ENCODE measurements at regions of chr22 and their contacts with region 1.

Region 1: DNA sequence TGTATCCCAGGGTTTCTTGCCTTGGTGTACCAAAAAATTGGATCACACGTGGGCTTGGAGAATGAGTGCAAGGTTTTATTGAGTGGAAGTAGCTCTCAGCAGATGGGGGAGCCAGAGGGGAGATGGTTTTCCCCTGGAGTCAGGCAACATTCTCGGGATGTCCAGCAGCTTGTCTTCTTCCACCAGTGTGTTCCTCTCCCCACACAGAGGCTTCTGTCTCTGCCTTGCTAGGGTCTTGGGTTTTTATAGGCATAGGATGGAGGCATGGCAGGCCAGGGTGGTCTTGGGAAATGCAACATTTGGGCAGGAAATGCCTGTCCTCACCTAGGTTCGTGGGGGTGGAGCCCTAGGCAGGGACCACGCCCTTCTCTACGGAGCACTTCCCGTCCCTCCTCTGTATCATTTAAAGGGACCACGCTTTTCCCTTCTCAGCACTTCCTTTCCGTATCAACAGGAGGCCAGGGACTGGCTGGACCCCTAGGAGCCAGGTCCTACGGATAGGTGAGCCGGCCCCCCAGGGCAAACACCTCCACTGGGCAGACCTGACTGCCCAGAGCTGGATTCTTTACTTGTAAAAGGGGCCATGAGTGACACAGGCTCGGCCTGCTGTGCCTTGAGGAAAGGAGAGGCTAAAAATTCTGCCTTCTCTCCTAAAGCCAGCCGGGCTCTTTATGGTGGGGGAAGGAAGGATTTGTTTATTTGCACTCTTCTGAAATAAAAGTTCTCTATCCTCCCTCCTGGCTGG is 55.3 kb upstream of the CCDC188 start:
- DNase-seq: peak; percentile 21 to 85 (median 73)
- ATAC-seq: peak; percentile 97
- H3K4me3 ChIP-seq: peak overlapping the region; percentile 70 to 86
- H3K4me3 Mint-ChIP-seq: peak overlapping the region; percentile 94
- H3K27ac ChIP-seq: peak overlapping the region; percentile 79 to 83
- H3K27ac Mint-ChIP-seq: peak overlapping the region; percentile 94
- H3K4me1 ChIP-seq: peaks cover 30% of the 10 kb centered on the region
- H3K4me1 Mint-ChIP-seq: peaks cover 29% of the 10 kb centered on the region
- H3K27me3 ChIP-seq: no peaks in the 10 kb centered on the region
- H3K27me3 Mint-ChIP-seq: no peaks in the 10 kb centered on the region
- CTCF ChIP-seq: no peak

Region 2: GRCh38 chr22:20137671-20138416 is 68.3 kb before region 1 on chr22:
- CTCF ChIA-PET with region 1: no interaction called
- POLR2A ChIA-PET with region 1: no interaction called
- intact Hi-C with region 1: no loop called
- DNase-seq: no peak
- ATAC-seq: no peak
- H3K4me3 ChIP-seq: no peak overlapping the region
- H3K4me3 Mint-ChIP-seq: no peak overlapping the region
- H3K27ac ChIP-seq: no peak overlapping the region
- H3K27ac Mint-ChIP-seq: no peak overlapping the region
- H3K4me1 ChIP-seq: peaks cover 25% of the 10 kb centered on the region
- H3K4me1 Mint-ChIP-seq: peaks cover 28% of the 10 kb centered on the region
- H3K27me3 ChIP-seq: no peaks in the 10 kb centered on the region
- H3K27me3 Mint-ChIP-seq: no peaks in the 10 kb centered on the region
- CTCF ChIP-seq: no peak

Region 3: GRCh38 chr22:20238536-20238900 is 32.4 kb after region 1 on chr22:
- CTCF ChIA-PET with region 1: interaction called, 4 read pairs
- POLR2A ChIA-PET with region 1: interaction called, 12 read pairs
- intact Hi-C with region 1: loop called in 1 of 2 experiments (anchors 1 kb)
- DNase-seq: peak in 8 of 9 experiments; percentile 31 to 80 (median 58)
- ATAC-seq: peak; percentile 41
- H3K4me3 ChIP-seq: peak overlapping the region in 1 of 2 experiments; percentile 7
- H3K4me3 Mint-ChIP-seq: peak overlapping the region; percentile 11
- H3K27ac ChIP-seq: peak overlapping the region; percentile 35 to 76
- H3K27ac Mint-ChIP-seq: peak overlapping the region; percentile 87
- H3K4me1 ChIP-seq: peaks cover 69% of the 10 kb centered on the region
- H3K4me1 Mint-ChIP-seq: peaks cover 35% of the 10 kb centered on the region
- H3K27me3 ChIP-seq: no peaks in the 10 kb centered on the region
- H3K27me3 Mint-ChIP-seq: no peaks in the 10 kb centered on the region
- CTCF ChIP-seq: no peak

Region 4: DNA sequence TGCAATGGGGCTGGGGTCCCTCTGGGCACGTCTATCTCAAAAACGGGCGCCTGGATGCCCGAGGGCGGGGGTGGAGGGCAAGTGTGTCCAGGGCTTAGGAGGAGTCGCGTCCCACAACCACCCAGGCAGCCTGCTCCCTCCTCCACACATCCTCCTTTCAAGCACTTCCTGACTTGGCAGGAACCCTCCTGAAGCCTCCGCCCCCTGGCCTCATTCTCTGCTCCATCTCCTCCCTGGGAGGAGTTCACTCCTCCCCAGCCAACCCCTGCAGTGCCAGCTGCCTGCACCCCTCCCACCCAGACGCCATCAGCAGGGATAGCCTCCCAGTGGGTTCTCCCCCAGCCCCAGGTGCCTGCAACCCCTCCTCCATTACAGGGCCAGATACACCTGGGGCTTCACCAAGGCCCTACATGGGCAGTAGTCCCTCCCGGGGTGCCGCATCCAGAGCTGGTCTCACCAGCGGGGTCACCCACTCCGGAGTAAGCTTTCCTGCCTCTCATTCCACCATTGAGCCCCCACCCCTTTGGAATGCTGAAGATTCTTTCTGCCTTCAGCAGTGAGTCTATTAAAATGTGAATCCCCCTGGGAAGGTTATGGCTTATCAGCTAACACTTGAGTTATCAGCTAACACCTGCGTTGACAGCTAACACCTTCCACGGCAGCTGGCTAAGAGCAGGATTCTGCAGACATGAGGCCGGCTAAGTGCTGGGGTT is 37.6 kb after region 1 on chr22:
- CTCF ChIA-PET with region 1: no interaction called
- POLR2A ChIA-PET with region 1: interaction called, 12 read pairs
- intact Hi-C with region 1: loop called (anchors 1 to 2 kb)
- DNase-seq: peak in 8 of 9 experiments; percentile 33 to 79 (median 64)
- ATAC-seq: peak; percentile 45
- H3K4me3 ChIP-seq: peak overlapping the region; percentile 24 to 72
- H3K4me3 Mint-ChIP-seq: peak overlapping the region; percentile 77
- H3K27ac ChIP-seq: peak overlapping the region; percentile 46 to 84
- H3K27ac Mint-ChIP-seq: peak overlapping the region; percentile 98
- H3K4me1 ChIP-seq: peaks cover 87% of the 10 kb centered on the region
- H3K4me1 Mint-ChIP-seq: peaks cover 51% of the 10 kb centered on the region
- H3K27me3 ChIP-seq: no peaks in the 10 kb centered on the region
- H3K27me3 Mint-ChIP-seq: no peaks in the 10 kb centered on the region
- CTCF ChIP-seq: no peak

Region 5: GRCh38 chr22:20268279-20269012 is 62.3 kb after region 1 on chr22 and contains the start of gene RTN4R:
- CTCF ChIA-PET with region 1: no interaction called
- POLR2A ChIA-PET with region 1: no interaction called
- intact Hi-C with region 1: loop called (anchors 1 to 2 kb)
- DNase-seq: peak; percentile 36 to 77 (median 54)
- ATAC-seq: peak; percentile 86
- H3K4me3 ChIP-seq: peak within 1 kb of the TSS; percentile 19 to 31
- H3K4me3 Mint-ChIP-seq: peak within 1 kb of the TSS; percentile 74
- H3K27ac ChIP-seq: no peak within 1 kb of the TSS
- H3K27ac Mint-ChIP-seq: no peak within 1 kb of the TSS
- H3K4me1 ChIP-seq: peaks cover 10% of the 10 kb centered on the region
- H3K4me1 Mint-ChIP-seq: peaks cover 6% of the 10 kb centered on the region
- H3K27me3 ChIP-seq: no peaks in the 10 kb centered on the region
- H3K27me3 Mint-ChIP-seq: no peaks in the 10 kb centered on the region
- CTCF ChIP-seq: peak; percentile 48
- total RNA-seq, gene RTN4R: 1.1 to 1.2 TPM